PC-9 (cell line): ENCODE measurements at regions of chr3 and their contacts with region 1.

Region 1: GRCh38 chr3:179347345-179348194 is at the start of gene MFN1:
- DNase-seq: peak; percentile 95
- H3K4me3 ChIP-seq: peak within 1 kb of the TSS; percentile 77
- H3K27ac ChIP-seq: peak within 1 kb of the TSS; percentile 62
- H3K4me1 ChIP-seq: peaks cover 17% of the 10 kb centered on the region
- H3K27me3 ChIP-seq: no peaks in the 10 kb centered on the region
- CTCF ChIP-seq: no peak
- total RNA-seq, gene MFN1: 69.1 and 69.6 TPM in 2 replicates

Region 2: GRCh38 chr3:179227349-179227748 is 120.2 kb before region 1 on chr3:
- CTCF ChIA-PET with region 1: no interaction called
- POLR2A ChIA-PET with region 1: no interaction called
- intact Hi-C with region 1: no loop called
- DNase-seq: peak in 1 of 2 experiments; percentile 43
- H3K4me3 ChIP-seq: no peak overlapping the region
- H3K27ac ChIP-seq: no peak overlapping the region
- H3K4me1 ChIP-seq: no peaks in the 10 kb centered on the region
- H3K27me3 ChIP-seq: no peaks in the 10 kb centered on the region
- CTCF ChIP-seq: no peak

Region 3: GRCh38 chr3:179322286-179323196 is 25.0 kb before region 1 on chr3 and contains the start of gene ZNF639:
- CTCF ChIA-PET with region 1: interaction called, 4 read pairs
- POLR2A ChIA-PET with region 1: interaction called, 8 read pairs
- intact Hi-C with region 1: loop called (anchors 1 kb)
- DNase-seq: peak; percentile 72 to 91
- H3K4me3 ChIP-seq: peak within 1 kb of the TSS; percentile 80
- H3K27ac ChIP-seq: peak within 1 kb of the TSS; percentile 60
- H3K4me1 ChIP-seq: peaks cover 25% of the 10 kb centered on the region
- H3K27me3 ChIP-seq: no peaks in the 10 kb centered on the region
- CTCF ChIP-seq: peak; percentile 80
- total RNA-seq, gene ZNF639: 39.3 and 40.3 TPM in 2 replicates

Region 4: DNA sequence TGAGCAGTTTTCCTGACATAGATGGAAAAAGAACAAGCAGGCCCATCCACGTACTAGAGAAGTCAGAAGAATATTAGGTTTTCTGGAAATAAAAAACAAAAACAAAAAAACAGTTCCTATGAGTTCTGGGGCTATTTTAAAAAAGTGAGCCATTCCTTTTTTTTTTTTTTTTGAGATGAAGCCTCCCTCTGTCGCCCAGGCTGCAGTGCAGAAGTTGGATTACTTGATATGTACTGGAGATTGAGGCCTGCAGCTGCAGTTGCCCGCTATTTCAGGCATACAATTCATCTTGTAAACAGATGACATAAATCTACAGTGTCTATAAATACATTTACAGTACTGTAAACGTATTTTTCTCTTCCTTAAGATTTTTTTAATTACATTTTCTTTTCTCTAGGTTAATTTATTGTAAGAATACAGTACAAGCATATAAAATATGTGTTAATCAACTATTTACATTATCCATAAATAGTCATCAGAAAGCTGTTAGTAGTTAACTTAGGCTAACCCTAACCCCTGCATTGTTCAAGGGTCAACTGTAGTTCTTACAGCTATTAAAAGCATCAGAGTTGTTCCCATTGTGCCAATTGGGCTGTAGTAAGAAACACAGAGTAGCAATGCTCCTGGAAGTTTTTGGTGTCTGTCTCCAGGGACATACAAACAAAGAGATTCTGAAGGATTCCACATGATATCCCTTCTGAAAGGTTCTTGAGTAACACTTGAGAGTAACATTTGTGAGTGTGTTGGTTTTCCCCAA is 204.0 kb after region 1 on chr3:
- CTCF ChIA-PET with region 1: no interaction called
- POLR2A ChIA-PET with region 1: no interaction called
- intact Hi-C with region 1: no loop called
- DNase-seq: peak in 1 of 2 experiments; percentile 21
- H3K4me3 ChIP-seq: no peak overlapping the region
- H3K27ac ChIP-seq: no peak overlapping the region
- H3K4me1 ChIP-seq: peaks cover 8% of the 10 kb centered on the region
- H3K27me3 ChIP-seq: no peaks in the 10 kb centered on the region
- CTCF ChIP-seq: no peak

Region 5: DNA sequence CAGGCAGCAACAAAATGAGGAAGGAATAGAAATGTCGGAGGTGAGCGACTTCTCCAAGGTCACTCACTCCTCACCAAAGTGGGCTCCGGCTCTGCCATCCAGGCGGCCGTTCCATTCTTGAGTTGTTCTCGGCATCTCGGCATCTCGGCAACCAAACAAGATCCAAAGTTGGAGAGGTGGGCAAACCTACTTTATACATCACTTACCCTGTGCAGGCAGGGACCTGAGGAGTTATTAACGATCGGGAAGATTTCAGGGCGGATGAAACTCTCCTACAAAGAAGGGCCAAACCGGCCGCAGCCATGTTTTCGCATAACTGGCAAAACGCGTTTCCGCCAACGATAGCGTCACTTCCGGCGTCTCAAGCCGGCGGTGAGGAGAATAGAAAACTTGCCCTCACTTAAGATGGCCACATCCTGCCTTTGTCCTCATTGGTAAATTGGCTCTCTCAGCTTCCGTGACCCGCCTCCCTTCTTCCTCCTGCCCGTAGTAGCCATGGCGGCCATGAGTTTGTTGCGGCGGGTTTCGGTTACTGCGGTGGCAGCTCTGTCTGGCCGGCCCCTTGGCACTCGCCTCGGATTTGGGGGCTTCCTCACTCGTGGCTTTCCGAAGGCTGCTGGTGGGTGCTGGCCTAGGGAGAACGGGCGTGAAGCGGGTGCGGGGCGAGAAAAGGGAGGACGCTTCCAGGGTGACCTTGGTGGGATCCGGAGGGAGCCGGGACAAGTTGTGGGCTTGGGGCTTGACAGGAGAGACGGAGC is 256.9 kb after region 1 on chr3 and contains the starts of genes MRPL47 and NDUFB5:
- CTCF ChIA-PET with region 1: no interaction called
- POLR2A ChIA-PET with region 1: no interaction called
- intact Hi-C with region 1: loop called (anchors 1 kb)
- DNase-seq: peak; percentile 90 to 95
- H3K4me3 ChIP-seq: peak within 1 kb of the TSS; percentile 94
- H3K27ac ChIP-seq: peak within 1 kb of the TSS; percentile 76
- H3K4me1 ChIP-seq: peaks cover 24% of the 10 kb centered on the region
- H3K27me3 ChIP-seq: no peaks in the 10 kb centered on the region
- CTCF ChIP-seq: no peak
- total RNA-seq, gene MRPL47: 51.3 and 56.1 TPM in 2 replicates
- total RNA-seq, gene NDUFB5: 121 and 128 TPM in 2 replicates